Kidney (tissue), 22 donors: ENCODE measurements at regions of chr19 and their contacts with region 1.

Region 1: DNA sequence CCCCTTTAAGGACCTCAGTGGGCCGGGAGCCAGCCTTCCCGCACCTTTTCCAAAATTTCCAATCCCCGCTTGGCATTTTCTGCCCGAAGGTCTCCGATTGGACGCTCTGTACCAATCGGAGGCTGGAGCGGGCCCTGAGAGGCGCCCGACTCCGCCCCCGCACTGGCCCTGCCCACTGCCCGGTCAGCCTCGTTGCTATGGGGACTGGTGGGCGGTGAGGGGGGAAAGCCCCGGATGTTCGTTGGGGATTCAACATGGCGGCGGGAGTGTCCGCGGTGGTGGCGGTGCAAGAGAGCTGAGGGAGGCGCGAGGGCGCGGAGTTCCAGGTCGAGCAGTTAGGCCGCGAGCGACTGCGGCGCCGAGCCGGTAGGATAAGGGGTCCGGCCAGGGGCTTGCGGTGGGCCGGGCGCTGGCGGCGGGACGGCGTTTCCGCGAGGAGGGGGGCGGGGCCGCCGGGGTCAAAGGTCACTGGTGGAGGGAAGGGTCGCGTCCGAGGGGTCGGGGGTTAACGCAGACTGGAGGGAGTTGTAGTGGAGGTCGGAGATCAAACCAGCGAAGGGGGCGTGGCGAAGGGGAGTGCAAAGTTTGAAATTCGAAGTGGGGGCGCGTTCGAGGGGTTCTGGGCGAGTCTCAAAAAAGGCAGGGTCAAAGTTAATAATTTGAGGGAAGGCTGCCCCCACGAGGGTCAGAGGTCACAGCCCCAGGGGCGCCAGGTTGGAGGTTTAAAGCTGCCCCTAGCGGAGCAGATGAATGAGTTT is at the start of gene PAK4:
- DNase-seq: peak; percentile 99
- H3K4me3 ChIP-seq: peak within 1 kb of the TSS; percentile 80 to 86 (median 84)
- H3K27ac ChIP-seq: peak within 1 kb of the TSS; percentile 93 to 98
- H3K4me1 ChIP-seq: peaks cover 0 to 33% (median 14%) of the 10 kb centered on the region in 3 donors
- H3K27me3 ChIP-seq: no peaks in the 10 kb centered on the region
- CTCF ChIP-seq: no peak
- total RNA-seq, gene PAK4: 55.6 TPM

Region 2: DNA sequence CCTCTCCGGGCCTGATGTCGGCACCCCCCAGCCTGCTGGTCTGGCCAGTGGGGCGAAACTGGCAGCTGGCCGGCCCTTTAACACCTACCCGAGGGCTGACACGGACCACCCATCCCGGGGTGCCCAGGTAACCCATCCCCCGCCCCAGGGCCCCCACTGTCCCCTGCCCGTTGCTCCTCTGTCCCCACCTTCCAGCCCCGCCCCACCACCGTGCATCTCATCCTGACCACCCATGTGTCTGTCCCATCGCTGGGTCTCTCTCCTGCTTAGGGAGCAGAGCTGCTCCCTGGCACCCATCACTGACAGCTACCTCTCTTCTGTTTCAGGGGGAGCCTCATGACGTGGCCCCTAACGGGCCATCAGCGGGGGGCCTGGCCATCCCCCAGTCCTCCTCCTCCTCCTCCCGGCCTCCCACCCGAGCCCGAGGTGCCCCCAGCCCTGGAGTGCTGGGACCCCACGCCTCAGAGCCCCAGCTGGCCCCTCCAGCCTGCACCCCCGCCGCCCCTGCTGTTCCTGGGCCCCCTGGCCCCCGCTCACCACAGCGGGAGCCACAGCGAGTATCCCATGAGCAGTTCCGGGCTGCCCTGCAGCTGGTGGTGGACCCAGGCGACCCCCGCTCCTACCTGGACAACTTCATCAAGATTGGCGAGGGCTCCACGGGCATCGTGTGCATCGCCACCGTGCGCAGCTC is 47.7 kb after region 1 on chr19:
- intact Hi-C with region 1: no loop called
- DNase-seq: peak in 1 of 5 donors; percentile 74
- H3K4me3 ChIP-seq: no peak overlapping the region
- H3K27ac ChIP-seq: no peak overlapping the region
- H3K4me1 ChIP-seq: peaks cover 0 to 4% (median 0%) of the 10 kb centered on the region in 3 donors
- H3K27me3 ChIP-seq: no peaks in the 10 kb centered on the region
- CTCF ChIP-seq: no peak

Region 3: DNA sequence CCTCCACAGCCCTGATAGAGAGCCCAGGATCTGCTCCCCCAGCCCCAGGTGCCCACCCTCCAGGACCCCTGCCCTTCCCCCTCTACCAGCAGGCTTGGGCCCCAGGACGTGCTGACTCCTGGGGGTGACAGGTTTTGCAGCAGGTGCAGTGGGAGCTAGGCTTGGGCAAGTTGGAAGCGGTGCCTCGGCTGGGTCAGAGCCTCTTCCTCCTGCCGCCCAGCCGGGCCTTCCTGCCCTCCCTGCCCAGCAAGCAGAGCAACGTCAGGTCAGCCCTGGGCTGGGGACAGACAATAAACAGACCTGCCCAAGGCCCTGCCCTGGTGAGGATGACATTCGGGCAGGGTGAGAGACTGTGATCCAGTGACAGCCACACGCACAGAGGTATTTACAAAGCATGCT is 61.8 kb after region 1 on chr19:
- intact Hi-C with region 1: loop called (anchors 10 kb)
- DNase-seq: peak in 1 of 5 donors; percentile 62
- H3K4me3 ChIP-seq: no peak overlapping the region
- H3K27ac ChIP-seq: no peak overlapping the region
- H3K4me1 ChIP-seq: no peaks in the 10 kb centered on the region
- H3K27me3 ChIP-seq: no peaks in the 10 kb centered on the region
- CTCF ChIP-seq: no peak

Region 4: GRCh38 chr19:39328046-39328705 is 202.4 kb after region 1 on chr19:
- intact Hi-C with region 1: loop called (anchors 5 kb)
- DNase-seq: peak; percentile 81 to 93 (median 87)
- H3K4me3 ChIP-seq: no peak overlapping the region
- H3K27ac ChIP-seq: no peak overlapping the region
- H3K4me1 ChIP-seq: no peaks in the 10 kb centered on the region
- H3K27me3 ChIP-seq: no peaks in the 10 kb centered on the region
- CTCF ChIP-seq: peak; percentile 99